CD8-positive, alpha-beta T cell (primary cell): ENCODE measurements at regions of chr14 and their contacts with region 1.

Region 1: DNA sequence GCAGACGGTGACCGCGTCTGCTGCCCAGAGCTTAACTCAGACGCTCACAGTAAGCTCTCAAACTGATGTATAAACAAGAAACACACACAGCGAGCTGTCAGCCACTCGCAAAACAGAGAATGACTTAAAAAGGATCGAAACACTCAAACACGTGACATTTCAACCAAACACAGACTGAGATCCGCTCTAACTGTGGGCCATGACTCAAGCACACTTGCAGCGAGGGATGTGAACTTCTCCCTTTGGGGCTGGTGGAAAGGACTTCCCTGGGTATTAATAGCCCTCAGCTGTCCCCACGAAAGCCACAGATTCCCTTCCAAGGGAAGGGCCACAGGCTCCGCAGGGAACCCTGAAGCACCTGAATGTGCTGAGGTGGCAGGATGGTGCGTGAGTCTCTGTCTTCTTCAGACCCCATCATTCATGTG is 29.1 kb downstream of the CCDC88C start:
- DNase-seq: peak in 5 of 9 experiments; percentile 56 to 81 (median 64)
- ATAC-seq: peak; percentile 68
- H3K4me3 ChIP-seq: peak overlapping the region in 1 of 2 experiments; percentile 37
- H3K4me3 Mint-ChIP-seq: peak overlapping the region; percentile 53
- H3K27ac ChIP-seq: peak overlapping the region in 1 of 2 experiments; percentile 76
- H3K27ac Mint-ChIP-seq: peak overlapping the region; percentile 87
- H3K4me1 ChIP-seq: peaks cover 91% of the 10 kb centered on the region
- H3K4me1 Mint-ChIP-seq: peaks cover 87% of the 10 kb centered on the region
- H3K27me3 ChIP-seq: no peaks in the 10 kb centered on the region
- H3K27me3 Mint-ChIP-seq: no peaks in the 10 kb centered on the region
- CTCF ChIP-seq: no peak

Region 2: GRCh38 chr14:91138511-91139359 is 249.8 kb before region 1 on chr14:
- CTCF ChIA-PET with region 1: no interaction called
- POLR2A ChIA-PET with region 1: no interaction called
- intact Hi-C with region 1: no loop called
- DNase-seq: peak in 7 of 9 experiments; percentile 19 to 74 (median 41)
- ATAC-seq: peak; percentile 72
- H3K4me3 ChIP-seq: no peak overlapping the region
- H3K4me3 Mint-ChIP-seq: no peak overlapping the region
- H3K27ac ChIP-seq: no peak overlapping the region
- H3K27ac Mint-ChIP-seq: peak overlapping the region; percentile 22
- H3K4me1 ChIP-seq: peaks cover 8% of the 10 kb centered on the region
- H3K4me1 Mint-ChIP-seq: peaks cover 24% of the 10 kb centered on the region
- H3K27me3 ChIP-seq: no peaks in the 10 kb centered on the region
- H3K27me3 Mint-ChIP-seq: no peaks in the 10 kb centered on the region
- CTCF ChIP-seq: peak; percentile 54

Region 3: DNA sequence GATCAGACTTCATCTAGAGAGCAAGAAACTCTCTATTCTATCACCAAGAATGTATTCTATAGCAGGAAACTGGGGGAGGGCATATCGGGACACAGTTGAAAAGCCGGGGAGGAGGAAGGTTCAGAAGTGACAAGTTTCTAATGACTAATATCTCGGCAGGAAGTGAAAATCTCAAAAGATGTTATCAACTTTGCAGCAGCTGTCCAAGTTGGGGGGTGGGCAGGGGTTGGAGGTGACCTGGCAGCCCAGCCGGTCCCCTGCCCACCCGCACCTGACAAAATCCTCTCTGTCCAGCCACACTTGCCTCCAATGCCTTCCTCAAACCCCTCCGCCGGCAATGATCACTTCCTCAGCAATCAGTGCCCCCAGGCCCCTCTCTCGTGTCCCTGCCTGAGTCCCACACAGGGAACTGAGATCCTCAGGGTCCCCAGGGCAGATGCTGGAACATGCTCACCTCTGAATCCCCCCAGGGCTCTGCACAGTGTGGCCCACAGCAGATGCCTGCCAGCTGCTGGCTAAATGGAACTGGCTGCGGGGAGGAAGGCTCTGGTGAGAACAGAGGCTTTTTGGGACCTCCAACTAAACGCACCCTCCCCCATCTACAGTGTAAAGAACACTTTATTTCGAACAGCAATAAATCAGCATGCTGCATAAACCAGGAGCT is 14.8 kb before region 1 on chr14:
- CTCF ChIA-PET with region 1: interaction called, 20 read pairs
- POLR2A ChIA-PET with region 1: interaction called, 32 read pairs
- intact Hi-C with region 1: loop called in 1 of 2 experiments (anchors 1 kb)
- DNase-seq: peak in 7 of 9 experiments; percentile 38 to 87 (median 65)
- ATAC-seq: peak; percentile 53
- H3K4me3 ChIP-seq: peak overlapping the region; percentile 45 to 58
- H3K4me3 Mint-ChIP-seq: peak overlapping the region; percentile 87
- H3K27ac ChIP-seq: peak overlapping the region; percentile 57 to 79
- H3K27ac Mint-ChIP-seq: peak overlapping the region; percentile 95
- H3K4me1 ChIP-seq: peaks cover 98% of the 10 kb centered on the region
- H3K4me1 Mint-ChIP-seq: peaks cover 99% of the 10 kb centered on the region
- H3K27me3 ChIP-seq: no peaks in the 10 kb centered on the region
- H3K27me3 Mint-ChIP-seq: no peaks in the 10 kb centered on the region
- CTCF ChIP-seq: no peak

Region 4: GRCh38 chr14:91402771-91403600 is 14.4 kb after region 1 on chr14:
- CTCF ChIA-PET with region 1: interaction called, 13 read pairs
- POLR2A ChIA-PET with region 1: interaction called, 3 read pairs
- intact Hi-C with region 1: loop called in 1 of 2 experiments (anchors 2 kb)
- DNase-seq: peak in 3 of 9 experiments; percentile 54 to 70 (median 60)
- ATAC-seq: peak; percentile 32
- H3K4me3 ChIP-seq: peak overlapping the region; percentile 39 to 43
- H3K4me3 Mint-ChIP-seq: peak overlapping the region; percentile 80
- H3K27ac ChIP-seq: peak overlapping the region; percentile 60 to 89
- H3K27ac Mint-ChIP-seq: peak overlapping the region; percentile 94
- H3K4me1 ChIP-seq: peaks cover 92% of the 10 kb centered on the region
- H3K4me1 Mint-ChIP-seq: peaks cover 88% of the 10 kb centered on the region
- H3K27me3 ChIP-seq: no peaks in the 10 kb centered on the region
- H3K27me3 Mint-ChIP-seq: no peaks in the 10 kb centered on the region
- CTCF ChIP-seq: no peak